ENCODE measurements at regions of chr4 and their contacts with region 1.

Region 1: GRCh38 chr4:99117876-99118693 is 26.0 kb downstream of the ADH4 start:
- DNase-seq: no peak
- H3K4me3 ChIP-seq: no peak overlapping the region
- H3K27ac ChIP-seq: no peak overlapping the region
- H3K4me1 ChIP-seq: no peaks in the 10 kb centered on the region
- H3K27me3 ChIP-seq: no peaks in the 10 kb centered on the region
- CTCF ChIP-seq: peak in 4 of 6 experiments; percentile 19 to 54 (median 40)
- POLR2A ChIP-seq: no peak

Region 2: DNA sequence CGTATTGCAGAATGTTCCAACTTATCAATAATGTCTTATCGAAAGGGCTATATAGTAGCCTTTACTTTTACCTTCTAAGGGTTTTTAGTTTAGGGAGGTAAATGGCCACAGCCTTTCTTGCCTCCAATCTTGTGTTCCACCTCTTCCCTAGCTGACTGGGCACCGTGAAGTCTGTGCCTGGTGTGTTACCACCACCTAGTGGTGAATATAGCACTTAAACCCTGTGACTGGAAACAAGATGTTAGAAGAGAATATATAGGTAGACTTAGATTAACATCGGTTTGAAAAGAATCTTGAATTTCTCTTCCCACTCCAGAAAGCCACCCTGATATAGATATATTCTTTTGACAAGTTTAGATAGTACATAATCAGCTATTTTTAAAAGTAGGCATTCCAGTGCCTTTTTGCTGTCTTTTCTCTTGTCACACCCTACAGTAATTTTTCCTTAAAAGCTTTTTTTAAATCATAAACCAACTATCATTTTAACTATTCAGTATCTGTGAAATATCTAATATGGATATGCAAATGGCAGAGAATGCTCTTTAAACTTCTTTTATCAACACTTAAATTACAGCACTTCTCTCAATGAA is 344.9 kb after region 1 on chr4:
- intact Hi-C with region 1: loop called in 1 of 2 experiments (anchors 5 kb)
- DNase-seq: peak; percentile 37 to 72 (median 45)
- H3K4me3 ChIP-seq: no peak overlapping the region
- H3K27ac ChIP-seq: no peak overlapping the region
- H3K4me1 ChIP-seq: no peaks in the 10 kb centered on the region
- H3K27me3 ChIP-seq: no peaks in the 10 kb centered on the region
- CTCF ChIP-seq: peak; percentile 62 to 84 (median 74)
- POLR2A ChIP-seq: no peak

Measured in adrenal gland (tissue), 19 donors.